Heart left ventricle (tissue), 16 donors: ENCODE measurements at regions of chr11 and their contacts with region 1.

Region 1: GRCh38 chr11:128824191-128825049 is 42.7 kb downstream of the KCNJ1 start:
- DNase-seq: peak in 3 of 5 donors; percentile 24 to 60 (median 31)
- ATAC-seq: peak in 3 of 4 donors; percentile 26 to 49 (median 44)
- H3K4me3 ChIP-seq: peak overlapping the region in 7 of 12 donors; percentile 5 to 36 (median 26)
- H3K27ac ChIP-seq: peak overlapping the region in 5 of 12 donors; percentile 35 to 63 (median 43)
- H3K4me1 ChIP-seq: peaks cover 0 to 12% (median 2%) of the 10 kb centered on the region in 12 donors
- H3K27me3 ChIP-seq: no peaks in the 10 kb centered on the region
- CTCF ChIP-seq: no peak
- POLR2A ChIP-seq: no peak

Region 2: GRCh38 chr11:128789497-128790150 is 34.8 kb before region 1 on chr11:
- intact Hi-C with region 1: loop called in 1 of 10 experiments (anchors 5 kb)
- DNase-seq: no peak
- ATAC-seq: peak; percentile 30 to 51 (median 34)
- H3K4me3 ChIP-seq: no peak overlapping the region
- H3K27ac ChIP-seq: peak overlapping the region in 5 of 12 donors; percentile 14 to 48 (median 20)
- H3K4me1 ChIP-seq: peaks cover 0 to 34% (median 12%) of the 10 kb centered on the region in 12 donors
- H3K27me3 ChIP-seq: no peaks in the 10 kb centered on the region
- CTCF ChIP-seq: no peak
- POLR2A ChIP-seq: no peak